Activated CD4-positive, alpha-beta memory T cell treated with anti-CD3 and anti-CD28 coated beads, Interleukin-2, amount 10 ng/mL, durations not matched to agents 7 days and 5 days (primary cell): ENCODE measurements at regions of chr1 and their contacts with region 1.

Region 1: GRCh38 chr1:156524481-156524869 is 23.9 kb upstream of the MEF2D start:
- DNase-seq: no peak
- H3K4me3 Mint-ChIP-seq: no peak overlapping the region
- H3K27ac Mint-ChIP-seq: peak overlapping the region; percentile 38
- H3K4me1 Mint-ChIP-seq: peaks cover 35% of the 10 kb centered on the region
- H3K27me3 Mint-ChIP-seq: peaks cover 3% of the 10 kb centered on the region

Region 2: GRCh38 chr1:156489166-156489934 is 35.1 kb before region 1 on chr1:
- CTCF ChIA-PET with region 1: interaction called, 3 read pairs
- POLR2A ChIA-PET with region 1: interaction called, 15 read pairs
- DNase-seq: peak; percentile 43
- H3K4me3 Mint-ChIP-seq: peak overlapping the region; percentile 49
- H3K27ac Mint-ChIP-seq: peak overlapping the region; percentile 65
- H3K4me1 Mint-ChIP-seq: peaks cover 75% of the 10 kb centered on the region
- H3K27me3 Mint-ChIP-seq: no peaks in the 10 kb centered on the region